IMR-90 (cell line): ENCODE measurements at regions of chr9 and their contacts with region 1.

Region 1: DNA sequence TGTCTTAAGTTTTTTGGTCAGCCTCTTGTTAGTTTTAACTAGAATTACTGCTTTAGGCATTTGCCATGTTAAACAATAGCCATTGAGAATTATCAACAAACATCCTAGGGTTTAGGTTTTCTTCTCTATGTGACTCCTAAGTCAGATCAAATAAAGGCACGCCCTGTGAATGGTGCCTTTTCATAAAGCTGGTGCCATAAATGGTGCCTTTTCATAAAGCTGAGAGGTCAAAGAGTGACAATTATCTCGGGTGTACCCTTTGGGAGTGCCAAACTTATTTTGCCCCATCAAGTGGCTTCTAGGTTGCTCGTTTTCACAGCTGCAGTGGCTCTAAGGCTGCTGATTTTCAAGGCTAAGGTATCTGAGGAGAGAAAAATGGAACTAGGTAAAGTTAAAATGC is 391.6 kb downstream of the DMRTA1 start:
- DNase-seq: no peak
- ATAC-seq: no peak
- H3K4me3 ChIP-seq: no peak overlapping the region
- H3K27ac ChIP-seq: no peak overlapping the region
- H3K4me1 ChIP-seq: no peaks in the 10 kb centered on the region
- H3K27me3 ChIP-seq: no peaks in the 10 kb centered on the region
- CTCF ChIP-seq: no peak
- POLR2A ChIP-seq: no peak
- RAD21 ChIP-seq: no peak

Region 2: DNA sequence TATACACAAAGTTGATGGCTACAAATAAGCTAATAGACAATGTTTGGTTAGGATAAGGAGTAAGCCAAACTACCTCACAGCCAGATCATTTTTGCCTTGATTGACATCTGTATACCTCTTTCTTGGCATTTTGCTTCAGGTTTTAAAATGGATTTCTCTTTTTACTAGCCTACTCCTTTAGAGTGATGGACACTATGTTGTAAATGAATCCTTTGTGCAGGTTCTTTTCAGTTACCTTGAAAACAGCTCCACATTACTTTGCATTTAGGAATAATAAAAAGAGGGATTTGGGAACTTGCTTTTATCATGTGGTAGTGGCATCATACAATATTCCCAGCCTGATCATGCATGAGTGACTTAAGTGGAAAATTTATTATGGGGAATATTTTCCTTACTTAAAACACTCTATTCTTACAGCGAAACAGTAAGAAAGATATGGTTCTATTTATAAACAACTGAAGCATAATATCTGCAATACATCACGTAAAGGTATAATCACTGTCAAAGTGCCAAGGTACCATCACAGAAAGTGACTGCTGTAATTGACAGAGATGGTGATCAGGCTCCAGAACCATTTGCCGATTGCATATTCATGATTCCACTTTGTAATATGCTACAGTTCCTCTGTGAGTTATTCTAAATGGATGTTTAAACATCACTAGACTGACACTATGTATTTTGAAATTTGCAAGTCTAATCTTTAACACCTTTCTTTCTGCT is 64.6 kb before region 1 on chr9:
- CTCF ChIA-PET with region 1: no interaction called
- POLR2A ChIA-PET with region 1: no interaction called
- dilution Hi-C with region 1: no loop called
- in situ Hi-C with region 1: loop called (anchors 10 kb)
- intact Hi-C with region 1: no loop called
- DNase-seq: no peak
- ATAC-seq: no peak
- H3K4me3 ChIP-seq: no peak overlapping the region
- H3K27ac ChIP-seq: no peak overlapping the region
- H3K4me1 ChIP-seq: no peaks in the 10 kb centered on the region
- H3K27me3 ChIP-seq: no peaks in the 10 kb centered on the region
- CTCF ChIP-seq: no peak
- POLR2A ChIP-seq: no peak
- RAD21 ChIP-seq: no peak

Region 3: GRCh38 chr9:23273779-23274178 is 435.5 kb after region 1 on chr9:
- CTCF ChIA-PET with region 1: no interaction called
- POLR2A ChIA-PET with region 1: no interaction called
- dilution Hi-C with region 1: no loop called
- in situ Hi-C with region 1: no loop called
- intact Hi-C with region 1: no loop called
- DNase-seq: no peak
- ATAC-seq: no peak
- H3K4me3 ChIP-seq: no peak overlapping the region
- H3K27ac ChIP-seq: no peak overlapping the region
- H3K4me1 ChIP-seq: no peaks in the 10 kb centered on the region
- H3K27me3 ChIP-seq: no peaks in the 10 kb centered on the region
- CTCF ChIP-seq: no peak
- POLR2A ChIP-seq: no peak
- RAD21 ChIP-seq: no peak